Right cardiac atrium (tissue), 5 donors: ENCODE measurements at regions of chrX and their contacts with region 1.

Region 1: DNA sequence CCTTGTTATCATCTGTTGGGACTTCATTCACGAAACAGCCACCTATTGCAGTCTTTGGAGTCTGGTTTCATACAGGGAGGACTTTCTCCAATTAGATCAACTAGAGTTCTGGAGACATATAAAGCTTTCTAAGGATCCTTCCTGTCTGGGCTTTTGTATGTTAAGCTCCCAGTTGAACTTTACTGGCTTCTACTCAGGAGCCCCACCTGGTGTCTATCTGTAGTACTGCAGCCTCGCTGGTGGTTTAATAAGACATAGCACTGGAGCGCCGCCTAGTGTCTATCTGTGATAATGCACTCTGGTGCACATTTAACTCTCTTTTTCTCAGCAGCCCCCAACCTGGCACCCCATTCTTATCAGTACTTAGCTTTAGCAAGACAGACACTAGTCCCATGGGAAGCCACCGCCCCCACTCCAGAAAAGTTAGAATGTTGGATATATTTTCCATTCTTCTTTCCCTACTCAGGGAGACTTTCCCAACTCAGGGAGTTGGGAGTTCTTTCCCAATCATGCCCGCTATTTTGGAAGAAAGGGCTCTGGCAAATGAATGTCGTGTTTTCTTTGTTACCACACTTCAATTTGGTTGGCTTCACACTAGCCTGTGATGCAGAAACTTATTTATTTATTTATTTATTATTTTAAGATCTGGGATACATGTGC is 36.9 kb upstream of the SYTL4 start:
- DNase-seq: peak; percentile 75 to 91 (median 84)
- ATAC-seq: peak in 1 of 2 donors; percentile 45
- H3K4me3 ChIP-seq: no peak overlapping the region
- H3K27ac ChIP-seq: no peak overlapping the region
- H3K4me1 ChIP-seq: no peaks in the 10 kb centered on the region
- H3K27me3 ChIP-seq: no peaks in the 10 kb centered on the region

Region 2: DNA sequence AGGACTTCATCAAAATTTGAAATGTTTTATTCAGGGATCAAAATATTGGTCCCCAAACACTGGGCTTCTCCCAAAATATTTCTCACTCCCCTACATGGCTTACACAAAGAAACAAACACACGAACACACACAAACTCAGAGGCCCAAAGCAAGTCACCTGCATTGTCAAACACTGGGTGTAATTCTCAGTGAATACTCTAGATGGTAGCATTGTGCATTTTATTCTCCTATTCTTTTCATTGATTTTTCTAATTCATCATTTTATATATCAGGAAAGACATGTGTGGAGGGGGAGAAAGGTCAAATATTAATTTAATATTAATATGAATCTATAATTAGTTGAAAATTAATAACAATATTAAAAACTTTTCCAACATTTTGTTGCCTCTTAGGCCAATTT is 256.3 kb before region 1 on chrX:
- intact Hi-C with region 1: loop called in 1 of 4 experiments (anchors 10 kb)
- DNase-seq: no peak
- ATAC-seq: no peak
- H3K4me3 ChIP-seq: no peak overlapping the region
- H3K27ac ChIP-seq: no peak overlapping the region
- H3K4me1 ChIP-seq: no peaks in the 10 kb centered on the region
- H3K27me3 ChIP-seq: no peaks in the 10 kb centered on the region

Region 3: GRCh38 chrX:100600758-100601157 is 168.1 kb before region 1 on chrX:
- intact Hi-C with region 1: no loop called
- DNase-seq: no peak
- ATAC-seq: no peak
- H3K4me3 ChIP-seq: no peak overlapping the region
- H3K27ac ChIP-seq: no peak overlapping the region
- H3K4me1 ChIP-seq: no peaks in the 10 kb centered on the region
- H3K27me3 ChIP-seq: no peaks in the 10 kb centered on the region